Endothelial cell of umbilical vein (primary cell): ENCODE measurements at regions of chr7 and their contacts with region 1.

Region 1: GRCh38 chr7:28272461-28272877 is 91.9 kb upstream of the JAZF1 start:
- DNase-seq: peak; percentile 51
- H3K4me3 ChIP-seq: no peak overlapping the region
- H3K27ac ChIP-seq: no peak overlapping the region
- H3K4me1 ChIP-seq: no peaks in the 10 kb centered on the region
- H3K27me3 ChIP-seq: peaks cover 3 to 6% of the 10 kb centered on the region in 2 experiments
- CTCF ChIP-seq: peak; percentile 46 to 54
- POLR2A ChIP-seq: no peak

Region 2: DNA sequence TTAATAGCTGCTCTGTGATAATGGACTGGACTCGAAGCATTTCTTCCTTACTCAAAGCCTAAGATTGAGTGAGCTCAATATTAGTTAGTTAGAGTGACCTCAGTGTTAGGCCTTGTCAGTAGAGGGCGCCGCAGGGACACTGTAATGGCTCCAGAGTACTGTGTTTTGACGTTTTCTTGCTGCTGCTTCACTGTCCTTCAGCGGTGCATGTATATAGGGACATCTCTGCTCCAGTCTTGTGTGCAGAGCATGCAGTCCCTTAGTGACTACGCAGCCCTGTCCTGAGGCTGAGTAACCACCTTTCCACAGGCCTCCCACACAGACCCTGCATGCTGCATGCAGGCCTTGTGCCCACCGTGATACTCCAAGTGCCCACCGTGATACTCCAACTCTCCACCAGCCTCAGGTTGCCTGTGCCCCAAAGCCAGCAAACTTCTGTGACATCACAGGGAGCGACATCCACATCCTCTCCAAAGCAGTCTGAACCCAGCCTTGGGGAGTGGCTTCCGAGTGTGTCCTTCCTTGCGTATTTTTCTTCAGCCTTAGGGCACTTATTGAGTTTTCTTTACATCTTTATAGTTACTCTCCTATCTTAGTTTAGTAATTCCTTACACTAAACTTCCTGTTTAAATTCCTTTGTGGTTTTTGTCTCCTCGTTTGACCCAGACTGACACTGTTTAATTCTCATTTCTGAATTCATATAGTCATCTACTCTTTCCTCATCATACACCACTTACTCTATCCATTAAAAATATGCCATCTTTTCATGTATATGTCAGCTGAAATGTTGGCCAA is 210.1 kb before region 1 on chr7:
- CTCF ChIA-PET with region 1: no interaction called
- POLR2A ChIA-PET with region 1: no interaction called
- dilution Hi-C with region 1: no loop called
- intact Hi-C with region 1: loop called (anchors 1 kb)
- DNase-seq: peak; percentile 59
- H3K4me3 ChIP-seq: no peak overlapping the region
- H3K27ac ChIP-seq: no peak overlapping the region
- H3K4me1 ChIP-seq: peaks cover 6% of the 10 kb centered on the region
- H3K27me3 ChIP-seq: no peaks in the 10 kb centered on the region
- CTCF ChIP-seq: peak; percentile 67 to 77
- POLR2A ChIP-seq: no peak

Region 3: DNA sequence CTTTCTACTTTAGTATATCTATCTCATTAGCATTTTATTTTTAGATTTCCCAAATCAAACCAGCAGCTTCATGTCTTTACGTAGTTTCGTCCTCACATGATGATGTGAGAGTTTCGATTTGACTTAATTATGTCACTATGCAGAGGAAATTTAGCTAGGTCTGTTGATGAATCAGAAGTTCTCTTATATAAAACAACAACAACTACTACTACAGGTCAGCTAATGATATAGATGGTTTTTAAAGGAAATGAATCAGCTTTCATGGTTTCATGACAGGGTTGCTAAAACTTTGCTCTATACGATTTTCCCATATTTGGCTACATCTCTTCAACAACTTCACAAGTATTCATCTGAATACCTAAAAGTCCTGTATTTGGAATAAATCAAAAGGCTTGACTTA is 120.5 kb before region 1 on chr7:
- CTCF ChIA-PET with region 1: no interaction called
- POLR2A ChIA-PET with region 1: no interaction called
- dilution Hi-C with region 1: no loop called
- intact Hi-C with region 1: loop called (anchors 5 kb)
- DNase-seq: peak; percentile 78
- H3K4me3 ChIP-seq: peak overlapping the region in 1 of 3 experiments; percentile 26
- H3K27ac ChIP-seq: peak overlapping the region; percentile 89
- H3K4me1 ChIP-seq: peaks cover 30% of the 10 kb centered on the region
- H3K27me3 ChIP-seq: no peaks in the 10 kb centered on the region
- CTCF ChIP-seq: no peak
- POLR2A ChIP-seq: no peak

Region 4: GRCh38 chr7:28179120-28180030 is 93.1 kb before region 1 on chr7:
- CTCF ChIA-PET with region 1: no interaction called
- POLR2A ChIA-PET with region 1: no interaction called
- dilution Hi-C with region 1: no loop called
- intact Hi-C with region 1: loop called (anchors 1 kb)
- DNase-seq: peak; percentile 21
- H3K4me3 ChIP-seq: peak overlapping the region; percentile 61 to 97 (median 67)
- H3K27ac ChIP-seq: peak overlapping the region; percentile 13
- H3K4me1 ChIP-seq: peaks cover 12% of the 10 kb centered on the region
- H3K27me3 ChIP-seq: no peaks in the 10 kb centered on the region
- CTCF ChIP-seq: no peak
- POLR2A ChIP-seq: no peak

Region 5: DNA sequence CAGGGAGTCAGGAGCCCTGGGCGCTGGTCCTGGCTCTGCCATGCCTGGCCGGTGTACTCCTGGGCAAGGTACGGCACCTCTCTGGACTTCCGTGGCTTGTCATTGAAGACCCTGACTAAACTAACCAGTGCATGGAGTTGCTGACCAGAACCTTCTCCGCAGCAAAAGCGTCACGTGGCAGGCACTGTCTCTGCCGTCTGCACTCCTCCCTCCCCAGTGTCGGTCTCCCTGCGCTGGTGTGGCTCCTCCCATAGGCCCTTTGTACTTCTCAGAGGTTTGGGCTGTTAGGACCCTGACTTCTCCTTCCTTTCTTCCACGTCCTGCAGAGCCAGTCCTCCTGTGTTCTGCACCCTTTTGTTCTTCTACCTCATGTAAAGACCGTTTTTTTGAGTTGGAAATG is 39.2 kb after region 1 on chr7:
- CTCF ChIA-PET with region 1: no interaction called
- POLR2A ChIA-PET with region 1: no interaction called
- dilution Hi-C with region 1: no loop called
- intact Hi-C with region 1: no loop called
- DNase-seq: no peak
- H3K4me3 ChIP-seq: no peak overlapping the region
- H3K27ac ChIP-seq: no peak overlapping the region
- H3K4me1 ChIP-seq: no peaks in the 10 kb centered on the region
- H3K27me3 ChIP-seq: peaks cover 28 to 39% of the 10 kb centered on the region in 2 experiments
- CTCF ChIP-seq: no peak
- POLR2A ChIP-seq: no peak

Region 6: DNA sequence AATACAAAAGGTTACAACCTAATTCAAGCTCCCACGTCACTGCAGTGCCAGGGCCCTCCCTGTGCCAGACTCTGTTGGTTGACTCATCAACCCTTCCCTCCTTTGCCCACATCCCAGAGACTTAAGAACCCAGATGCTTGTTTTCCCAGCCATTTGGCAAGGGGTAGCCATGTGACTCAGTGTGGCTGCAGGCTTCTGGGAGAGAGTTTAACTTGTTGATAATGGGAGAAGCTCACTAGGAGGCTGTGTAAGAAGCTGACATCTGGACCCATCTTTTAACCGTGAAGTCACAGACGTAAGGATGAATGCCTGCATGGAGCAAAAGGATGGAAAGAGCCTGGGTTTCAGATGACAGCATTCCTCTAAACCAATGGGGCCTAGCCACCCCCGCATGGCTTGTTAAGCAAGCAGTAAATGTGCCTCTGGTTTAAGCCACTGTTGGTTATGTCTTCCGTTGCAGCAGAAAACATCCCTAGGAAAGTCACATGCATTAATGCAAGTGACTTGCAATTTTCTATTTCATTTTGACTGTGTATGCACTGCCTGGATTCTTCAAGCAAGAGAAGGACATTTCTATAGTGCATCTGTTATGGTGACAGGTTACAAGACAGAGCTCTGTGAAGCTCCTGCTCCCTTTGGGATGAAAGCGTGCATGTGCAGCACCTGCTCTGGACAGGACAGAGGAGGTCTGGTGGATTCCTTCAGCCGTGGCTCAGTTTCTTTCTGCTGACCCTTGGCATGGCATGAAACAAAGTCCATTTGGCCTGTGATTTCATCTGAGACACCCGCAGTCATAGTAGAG is 82.3 kb after region 1 on chr7:
- CTCF ChIA-PET with region 1: no interaction called
- POLR2A ChIA-PET with region 1: no interaction called
- dilution Hi-C with region 1: no loop called
- intact Hi-C with region 1: no loop called
- DNase-seq: peak; percentile 24
- H3K4me3 ChIP-seq: no peak overlapping the region
- H3K27ac ChIP-seq: no peak overlapping the region
- H3K4me1 ChIP-seq: no peaks in the 10 kb centered on the region
- H3K27me3 ChIP-seq: peaks cover 0 to 3% of the 10 kb centered on the region in 2 experiments
- CTCF ChIP-seq: no peak
- POLR2A ChIP-seq: no peak